ENCODE measurements at regions of chr5 and their contacts with region 1.

Region 1: DNA sequence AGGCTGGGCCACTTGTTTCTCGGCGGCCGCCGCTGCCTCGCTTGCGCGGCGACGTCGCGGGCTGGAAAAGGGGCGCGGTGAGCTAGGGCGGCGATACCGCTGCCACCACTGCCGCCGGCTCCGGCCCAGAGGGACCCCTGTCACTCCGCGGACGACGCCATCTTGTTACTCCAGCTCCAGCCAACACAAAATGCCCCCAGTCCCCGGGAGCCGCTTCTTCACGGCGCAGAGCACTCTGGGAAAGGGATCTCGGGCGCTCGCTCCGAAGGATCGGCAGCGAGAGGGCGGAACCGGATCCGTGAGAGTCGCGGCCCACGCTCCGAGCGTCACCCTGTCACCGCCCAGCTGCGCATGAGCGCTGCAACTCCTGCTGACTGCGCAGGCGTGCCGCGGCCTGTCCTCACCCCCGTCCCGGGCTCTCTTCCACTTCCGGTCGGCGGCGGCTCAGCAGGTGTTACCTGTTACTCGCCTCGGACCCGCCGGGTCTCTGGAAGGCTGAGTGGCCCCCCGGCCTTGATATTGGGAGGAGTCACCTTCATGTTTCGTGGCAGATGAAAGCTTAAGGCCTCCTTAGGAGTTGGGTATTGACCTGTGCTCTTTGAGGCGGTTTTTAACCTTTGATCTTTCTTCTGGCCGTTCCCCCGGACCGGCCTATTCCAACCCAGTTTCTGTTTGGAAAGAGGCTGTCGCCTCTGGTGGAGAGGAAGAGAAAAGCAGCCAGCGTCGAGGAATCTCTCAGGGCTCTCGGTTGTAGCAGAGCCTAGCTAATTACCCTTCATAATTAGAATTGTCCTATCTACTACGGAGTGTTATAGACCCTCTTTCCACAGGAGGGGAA is at the start of gene CSNK1A1:
- DNase-seq: peak; percentile 99
- H3K4me3 Mint-ChIP-seq: peak within 1 kb of the TSS; percentile 93
- H3K27ac Mint-ChIP-seq: peak within 1 kb of the TSS; percentile 95
- H3K4me1 Mint-ChIP-seq: peaks cover 37% of the 10 kb centered on the region
- H3K27me3 Mint-ChIP-seq: no peaks in the 10 kb centered on the region
- total RNA-seq, gene CSNK1A1: 194 to 203 TPM

Region 2: DNA sequence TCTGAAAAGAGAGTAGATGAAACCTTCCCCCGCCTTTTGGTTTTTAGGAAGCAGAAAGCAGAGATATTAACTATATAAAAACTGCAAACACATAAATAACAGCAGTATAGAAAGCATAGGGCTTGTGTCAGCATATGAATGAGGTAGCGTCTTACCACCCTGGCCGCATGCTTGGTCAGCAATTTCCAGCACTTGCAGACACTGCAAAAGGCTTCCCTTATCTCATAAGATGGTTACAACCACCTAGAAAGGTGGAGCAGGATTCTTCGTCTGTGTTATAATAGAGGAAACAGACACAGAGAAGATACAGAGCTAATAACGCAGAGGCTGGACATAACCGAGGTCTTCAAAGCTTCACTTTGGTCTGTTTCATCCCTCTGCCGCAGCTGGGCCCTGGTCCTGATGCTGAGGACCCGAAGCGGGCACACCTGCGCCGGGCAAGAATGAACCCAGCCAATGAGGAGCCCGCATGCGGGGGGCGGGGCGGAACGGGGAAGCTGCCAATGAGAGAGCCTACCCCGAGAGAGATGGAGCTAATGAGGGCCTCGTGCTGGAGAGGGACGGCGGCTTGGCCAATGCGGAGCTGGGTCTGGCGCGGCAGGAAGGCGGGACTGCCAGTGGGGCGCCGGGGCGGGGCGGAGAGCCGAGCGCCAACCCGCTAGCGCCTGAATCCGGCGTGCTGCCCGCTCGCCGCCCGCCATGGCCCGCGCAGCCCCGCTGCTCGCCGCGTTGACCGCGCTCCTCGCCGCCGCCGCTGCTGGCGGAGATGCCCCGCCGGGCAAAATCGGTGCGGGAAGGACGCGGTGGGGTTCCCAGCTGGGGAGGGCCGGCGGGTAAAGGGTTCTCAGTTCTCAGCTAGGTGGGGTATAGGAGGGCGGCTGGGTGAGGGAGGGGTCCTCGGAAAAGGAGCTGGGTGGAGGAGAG is 193.8 kb before region 1 on chr5 and contains the start of gene PCYOX1L:
- CTCF ChIA-PET with region 1: interaction called, 16 read pairs
- POLR2A ChIA-PET with region 1: interaction called, 20 read pairs
- DNase-seq: peak; percentile 94
- H3K4me3 Mint-ChIP-seq: peak within 1 kb of the TSS; percentile 92
- H3K27ac Mint-ChIP-seq: peak within 1 kb of the TSS; percentile 85
- H3K4me1 Mint-ChIP-seq: peaks cover 71% of the 10 kb centered on the region
- H3K27me3 Mint-ChIP-seq: no peaks in the 10 kb centered on the region
- total RNA-seq, gene PCYOX1L: 41.2 to 42.1 TPM

Region 3: DNA sequence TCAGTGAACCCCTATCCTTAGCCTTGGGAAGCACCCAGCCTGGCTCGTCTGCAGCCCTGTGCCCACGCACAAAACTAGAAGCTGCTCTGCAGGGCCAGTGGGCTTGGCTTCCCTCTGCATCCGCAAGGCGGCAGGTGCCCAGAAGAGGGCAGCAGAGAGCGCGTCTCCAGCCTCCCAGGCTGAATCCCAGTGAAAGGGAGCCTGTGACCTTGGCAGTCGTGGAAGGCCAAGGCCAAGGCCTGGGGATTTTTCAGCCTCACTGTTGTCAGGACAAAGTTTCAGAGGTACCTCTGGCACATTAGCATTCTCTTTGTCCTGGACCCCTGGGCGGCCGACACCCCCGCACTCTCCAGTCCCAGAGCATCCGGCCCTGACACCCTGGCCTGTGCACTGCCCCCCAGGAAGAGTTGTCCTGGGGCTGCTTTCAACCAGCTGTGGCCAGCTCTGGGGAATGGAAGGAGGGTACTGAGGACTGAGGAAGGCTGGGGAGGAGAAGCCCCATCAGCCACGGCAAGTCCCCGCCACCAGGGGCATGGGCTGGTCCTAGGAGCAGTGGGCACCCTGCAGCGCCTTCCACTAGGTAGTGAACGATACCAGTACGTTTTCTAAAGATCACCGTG is 108.7 kb before region 1 on chr5:
- CTCF ChIA-PET with region 1: interaction called, 20 read pairs
- POLR2A ChIA-PET with region 1: interaction called, 4 read pairs
- DNase-seq: peak; percentile 75
- H3K4me3 Mint-ChIP-seq: no peak overlapping the region
- H3K27ac Mint-ChIP-seq: peak overlapping the region; percentile 24
- H3K4me1 Mint-ChIP-seq: peaks cover 34% of the 10 kb centered on the region
- H3K27me3 Mint-ChIP-seq: no peaks in the 10 kb centered on the region

Region 4: GRCh38 chr5:149526845-149527580 is 24.4 kb before region 1 on chr5:
- CTCF ChIA-PET with region 1: interaction called, 3 read pairs
- POLR2A ChIA-PET with region 1: interaction called, 21 read pairs
- DNase-seq: no peak
- H3K4me3 Mint-ChIP-seq: no peak overlapping the region
- H3K27ac Mint-ChIP-seq: no peak overlapping the region
- H3K4me1 Mint-ChIP-seq: peaks cover 51% of the 10 kb centered on the region
- H3K27me3 Mint-ChIP-seq: no peaks in the 10 kb centered on the region

Region 5: DNA sequence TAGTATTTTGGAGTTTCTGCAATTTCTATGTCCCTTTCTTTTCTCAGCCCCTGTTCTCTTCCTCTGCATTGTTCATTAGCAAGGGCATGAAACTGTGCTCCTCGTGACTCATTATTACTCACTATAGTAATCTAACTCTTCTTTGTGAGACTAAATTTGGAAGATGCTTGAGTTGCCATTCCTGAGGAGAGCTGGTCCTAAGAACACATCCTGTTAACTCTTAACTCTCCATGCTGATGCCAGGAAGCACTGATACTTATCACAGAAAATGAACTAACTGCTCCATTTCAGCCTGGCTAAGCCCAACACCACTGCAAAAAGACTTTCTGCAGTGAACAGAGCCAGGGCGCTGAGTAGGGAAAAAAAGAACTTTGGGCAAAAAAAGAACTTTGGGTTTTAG is 10.4 kb after region 1 on chr5:
- CTCF ChIA-PET with region 1: interaction called, 17 read pairs
- POLR2A ChIA-PET with region 1: interaction called, 15 read pairs
- DNase-seq: no peak
- H3K4me3 Mint-ChIP-seq: no peak overlapping the region
- H3K27ac Mint-ChIP-seq: no peak overlapping the region
- H3K4me1 Mint-ChIP-seq: peaks cover 24% of the 10 kb centered on the region
- H3K27me3 Mint-ChIP-seq: no peaks in the 10 kb centered on the region

Region 6: DNA sequence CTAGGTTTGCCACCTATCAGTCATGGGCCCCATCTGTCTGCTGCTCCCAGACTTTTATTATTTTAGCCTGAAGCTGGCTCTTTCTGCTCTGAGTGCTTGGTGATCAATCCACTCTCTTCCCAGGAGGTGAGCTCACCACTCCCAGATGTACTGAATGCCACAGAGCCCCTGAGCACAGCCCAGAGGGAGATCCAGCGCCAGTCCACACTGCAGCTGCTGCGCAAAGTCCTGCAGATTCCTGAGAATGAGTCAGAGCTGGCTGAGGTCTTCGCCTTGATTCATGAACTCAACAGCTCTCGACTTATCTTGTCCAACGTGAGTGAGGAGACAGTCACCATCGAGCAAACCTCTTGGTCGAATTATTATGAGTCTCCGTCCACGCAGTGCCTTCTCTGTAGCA is 485.1 kb after region 1 on chr5:
- CTCF ChIA-PET with region 1: no interaction called
- POLR2A ChIA-PET with region 1: no interaction called
- DNase-seq: no peak
- H3K4me3 Mint-ChIP-seq: no peak overlapping the region
- H3K27ac Mint-ChIP-seq: no peak overlapping the region
- H3K4me1 Mint-ChIP-seq: no peaks in the 10 kb centered on the region
- H3K27me3 Mint-ChIP-seq: no peaks in the 10 kb centered on the region

Measured in activated CD4-positive, alpha-beta memory T cell treated with anti-CD3 and anti-CD28 coated beads, Interleukin-2, amount 10 ng/mL, durations not matched to agents 7 days and 5 days (primary cell).